Upper lobe of right lung (tissue), 1 donor: ENCODE measurements at regions of chr18 and their contacts with region 1.

Region 1: DNA sequence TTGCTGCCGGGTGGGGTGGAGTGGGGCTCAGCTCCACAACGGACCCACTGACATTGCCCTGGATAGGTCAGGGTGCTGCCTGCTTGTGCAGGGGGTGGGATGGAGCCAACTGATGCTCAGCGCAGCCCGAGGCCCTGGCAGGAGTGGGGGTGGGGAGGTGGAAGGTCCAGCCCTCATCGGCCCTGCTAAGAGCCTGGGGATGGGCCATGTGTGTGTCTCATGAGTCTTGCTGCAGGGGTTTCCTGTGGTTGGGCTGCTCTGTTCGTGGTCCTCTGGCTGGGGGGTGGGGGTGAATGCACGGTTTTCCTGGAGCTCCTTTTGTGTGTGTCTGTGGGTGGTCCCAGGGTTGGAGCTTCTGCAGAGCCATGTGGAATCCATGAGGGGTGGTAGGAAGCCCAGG is 39.4 kb upstream of the GALR1 start:
- DNase-seq: no peak
- ATAC-seq: no peak
- H3K4me3 ChIP-seq: no peak overlapping the region
- H3K27ac ChIP-seq: no peak overlapping the region
- H3K4me1 ChIP-seq: peaks cover 33% of the 10 kb centered on the region
- H3K27me3 ChIP-seq: no peaks in the 10 kb centered on the region
- CTCF ChIP-seq: no peak

Region 2: GRCh38 chr18:76953583-76954233 is 256.5 kb before region 1 on chr18:
- intact Hi-C with region 1: no loop called
- DNase-seq: peak; percentile 90
- ATAC-seq: peak; percentile 63
- H3K4me3 ChIP-seq: no peak overlapping the region
- H3K27ac ChIP-seq: peak overlapping the region; percentile 61
- H3K4me1 ChIP-seq: peaks cover 28% of the 10 kb centered on the region
- H3K27me3 ChIP-seq: no peaks in the 10 kb centered on the region
- CTCF ChIP-seq: no peak

Region 3: GRCh38 chr18:77000527-77000926 is 209.7 kb before region 1 on chr18:
- intact Hi-C with region 1: loop called (anchors 5 kb)
- DNase-seq: no peak
- ATAC-seq: peak; percentile 79
- H3K4me3 ChIP-seq: no peak overlapping the region
- H3K27ac ChIP-seq: no peak overlapping the region
- H3K4me1 ChIP-seq: no peaks in the 10 kb centered on the region
- H3K27me3 ChIP-seq: no peaks in the 10 kb centered on the region
- CTCF ChIP-seq: peak; percentile 99